ENCODE measurements at regions of chr11 and their contacts with region 1.

Region 1: DNA sequence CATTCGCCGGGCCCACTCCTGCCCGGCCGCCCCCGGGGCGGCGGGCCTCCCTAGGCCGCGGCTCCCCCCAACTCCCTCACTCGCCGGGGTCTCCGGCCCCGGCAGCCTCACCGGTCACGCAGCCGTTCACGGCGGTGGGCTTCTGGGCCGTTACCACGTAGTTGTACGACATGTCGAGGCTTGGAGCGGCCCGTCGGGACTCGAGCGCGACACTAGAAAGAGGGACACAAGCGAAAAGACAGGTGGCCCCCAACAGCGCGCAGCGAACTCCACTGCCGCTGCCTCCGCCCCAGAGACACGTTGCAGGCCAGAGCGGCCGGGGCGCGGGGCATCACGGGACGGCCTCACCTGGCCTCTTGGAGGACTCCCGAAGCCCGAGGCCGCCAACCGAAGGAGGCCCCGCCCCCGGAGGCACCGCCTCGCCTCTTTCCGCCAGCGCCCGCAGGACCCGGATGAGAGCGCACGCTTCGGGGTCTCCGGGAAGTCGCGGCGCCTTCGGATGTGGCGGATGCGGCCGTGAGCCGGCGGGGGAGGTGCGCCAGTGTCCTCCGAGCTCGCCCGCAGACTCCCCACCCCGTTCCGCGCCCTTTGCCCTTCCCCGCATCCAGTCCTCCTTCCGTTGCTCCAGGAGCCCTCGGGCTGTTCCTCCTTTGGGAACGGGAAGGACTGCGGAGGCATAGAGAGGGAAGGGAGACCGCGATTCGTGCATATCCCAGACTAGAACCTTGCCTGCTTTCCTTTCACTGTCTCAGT is at the starts of genes DDB1 and TKFC:
- DNase-seq: peak; percentile 99
- ATAC-seq: peak; percentile 94
- H3K4me3 Mint-ChIP-seq: peak within 1 kb of the TSS; percentile 97
- H3K27ac Mint-ChIP-seq: peak within 1 kb of the TSS; percentile 100
- H3K4me1 Mint-ChIP-seq: peaks cover 64% of the 10 kb centered on the region
- H3K27me3 Mint-ChIP-seq: no peaks in the 10 kb centered on the region
- total RNA-seq, gene DDB1: 258 to 268 TPM
- total RNA-seq, gene TKFC: 100 to 107 TPM

Region 2: GRCh38 chr11:60913793-60914632 is 419.0 kb before region 1 on chr11 and contains the start of gene TMEM109:
- CTCF ChIA-PET with region 1: no interaction called
- POLR2A ChIA-PET with region 1: no interaction called
- intact Hi-C with region 1: loop called in 1 of 2 experiments (anchors 2 kb)
- DNase-seq: peak; percentile 93
- ATAC-seq: peak; percentile 78
- H3K4me3 Mint-ChIP-seq: peak within 1 kb of the TSS; percentile 87
- H3K27ac Mint-ChIP-seq: peak within 1 kb of the TSS; percentile 97
- H3K4me1 Mint-ChIP-seq: peaks cover 58% of the 10 kb centered on the region
- H3K27me3 Mint-ChIP-seq: no peaks in the 10 kb centered on the region
- total RNA-seq, gene TMEM109: 80.3 to 89.1 TPM

Region 3: GRCh38 chr11:61201476-61201875 is 131.5 kb before region 1 on chr11:
- CTCF ChIA-PET with region 1: no interaction called
- POLR2A ChIA-PET with region 1: no interaction called
- intact Hi-C with region 1: no loop called
- DNase-seq: no peak
- ATAC-seq: no peak
- H3K4me3 Mint-ChIP-seq: no peak overlapping the region
- H3K27ac Mint-ChIP-seq: no peak overlapping the region
- H3K4me1 Mint-ChIP-seq: no peaks in the 10 kb centered on the region
- H3K27me3 Mint-ChIP-seq: peaks cover 12% of the 10 kb centered on the region

Region 4: GRCh38 chr11:61353131-61354067 is 20.4 kb after region 1 on chr11:
- CTCF ChIA-PET with region 1: interaction called, 20 read pairs
- POLR2A ChIA-PET with region 1: interaction called, 3 read pairs
- intact Hi-C with region 1: no loop called
- DNase-seq: no peak
- ATAC-seq: no peak
- H3K4me3 Mint-ChIP-seq: no peak overlapping the region
- H3K27ac Mint-ChIP-seq: no peak overlapping the region
- H3K4me1 Mint-ChIP-seq: peaks cover 4% of the 10 kb centered on the region
- H3K27me3 Mint-ChIP-seq: no peaks in the 10 kb centered on the region

Region 5: DNA sequence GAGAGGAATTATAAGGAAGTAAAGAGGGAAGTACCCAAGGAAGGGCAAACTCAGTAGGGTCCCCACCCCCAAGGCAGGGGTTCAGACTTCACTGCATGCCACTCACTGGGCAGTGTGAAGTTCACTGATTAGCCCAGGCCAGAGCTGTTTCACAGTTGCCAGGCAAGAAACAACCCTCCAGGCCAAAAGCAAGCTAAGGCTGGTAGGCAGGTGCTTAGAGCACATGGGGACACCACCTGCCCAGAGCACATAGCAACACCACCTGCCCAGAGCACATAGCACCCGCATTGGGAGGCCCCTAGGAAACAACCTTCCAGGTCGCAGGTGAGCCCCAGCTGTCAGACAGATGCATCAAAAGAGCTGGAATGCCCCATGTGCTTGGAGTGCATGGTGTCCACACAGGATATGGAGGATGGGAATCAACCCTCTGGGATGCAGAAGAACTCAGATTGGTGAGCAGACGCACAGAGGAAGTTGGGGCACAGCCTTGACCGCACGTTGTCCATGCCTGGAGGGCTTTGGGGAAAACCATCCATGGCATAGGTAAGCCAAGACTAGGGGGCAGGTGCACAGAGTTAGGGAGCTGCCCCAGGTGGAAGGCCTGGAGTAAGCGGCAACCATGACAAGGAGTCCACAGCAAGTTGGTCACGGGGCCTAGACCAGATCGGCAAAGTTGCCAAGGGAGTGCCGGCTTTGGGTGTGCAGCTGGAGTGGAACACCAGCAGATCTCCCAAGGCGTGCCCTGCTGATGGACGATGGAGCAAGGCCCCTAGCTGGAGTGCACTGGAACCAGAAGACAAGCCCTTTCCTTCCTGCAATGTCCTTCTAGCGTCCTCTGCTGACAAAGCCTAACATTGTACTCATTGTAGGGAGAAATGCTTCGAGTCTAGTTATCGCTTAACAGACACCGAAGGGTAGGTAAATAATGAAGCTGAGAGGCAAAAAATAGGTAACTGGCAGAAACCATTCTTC is 51.6 kb after region 1 on chr11:
- CTCF ChIA-PET with region 1: interaction called, 185 read pairs
- POLR2A ChIA-PET with region 1: interaction called, 6 read pairs
- intact Hi-C with region 1: loop called (anchors 1 kb)
- DNase-seq: no peak
- ATAC-seq: no peak
- H3K4me3 Mint-ChIP-seq: no peak overlapping the region
- H3K27ac Mint-ChIP-seq: no peak overlapping the region
- H3K4me1 Mint-ChIP-seq: peaks cover 3% of the 10 kb centered on the region
- H3K27me3 Mint-ChIP-seq: no peaks in the 10 kb centered on the region

Region 6: DNA sequence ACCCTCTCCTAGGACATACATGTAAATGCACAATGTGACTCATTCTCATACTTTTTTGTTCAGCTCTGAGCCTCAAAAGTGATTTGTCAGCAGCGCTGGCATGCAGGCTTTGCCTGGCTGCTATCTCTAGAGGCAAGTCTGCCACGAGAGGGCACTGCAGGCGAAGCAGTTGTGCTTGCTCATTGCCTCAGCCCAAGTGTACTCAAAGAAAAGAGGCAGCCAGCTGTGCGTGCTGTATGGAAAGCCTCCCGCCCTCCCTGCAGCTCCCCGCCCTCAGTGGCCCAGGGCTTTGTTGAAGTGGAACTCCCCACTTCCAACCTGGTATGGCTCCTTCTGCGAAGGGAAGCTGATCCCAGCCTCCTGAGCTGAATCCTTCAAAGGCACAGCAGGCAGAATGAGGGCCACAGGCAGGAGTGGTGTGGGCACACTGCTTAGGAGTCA is 113.3 kb after region 1 on chr11:
- CTCF ChIA-PET with region 1: interaction called, 17 read pairs
- POLR2A ChIA-PET with region 1: interaction called, 3 read pairs
- intact Hi-C with region 1: no loop called
- DNase-seq: peak; percentile 95
- ATAC-seq: peak; percentile 87
- H3K4me3 Mint-ChIP-seq: no peak overlapping the region
- H3K27ac Mint-ChIP-seq: peak overlapping the region; percentile 44
- H3K4me1 Mint-ChIP-seq: peaks cover 35% of the 10 kb centered on the region
- H3K27me3 Mint-ChIP-seq: no peaks in the 10 kb centered on the region

Region 7: DNA sequence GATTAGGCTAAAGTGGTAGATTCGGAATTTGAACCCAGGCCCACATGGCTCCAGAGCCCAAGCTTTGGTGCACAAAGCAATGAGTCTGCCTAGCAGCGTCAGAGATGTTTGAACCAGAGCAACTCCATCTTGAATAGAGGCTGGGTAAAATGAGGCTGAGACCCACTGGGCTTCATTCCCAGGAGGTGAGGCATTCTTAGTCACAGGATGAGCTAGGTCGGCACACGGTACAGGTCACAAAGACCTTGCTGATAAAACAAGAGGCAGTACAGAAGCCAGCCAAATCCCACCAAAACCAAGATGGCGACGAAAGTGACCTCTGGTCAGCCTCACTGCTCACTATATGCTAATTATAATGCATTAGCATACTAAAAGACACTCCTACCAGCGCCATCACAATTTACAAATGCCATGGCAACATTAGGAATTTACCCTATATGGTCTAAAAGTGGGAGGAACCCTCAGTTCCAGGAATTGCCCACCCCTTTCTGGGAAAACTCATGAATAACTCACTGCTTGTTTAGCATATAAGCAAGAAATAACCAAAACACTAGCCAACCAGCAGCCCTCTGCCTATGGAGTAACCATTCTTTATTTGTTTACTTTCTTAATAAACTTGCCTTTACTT is 307.0 kb after region 1 on chr11:
- CTCF ChIA-PET with region 1: interaction called, 8 read pairs
- POLR2A ChIA-PET with region 1: no interaction called
- intact Hi-C with region 1: loop called in 1 of 2 experiments (anchors 5 kb)
- DNase-seq: peak; percentile 15
- ATAC-seq: no peak
- H3K4me3 Mint-ChIP-seq: no peak overlapping the region
- H3K27ac Mint-ChIP-seq: no peak overlapping the region
- H3K4me1 Mint-ChIP-seq: no peaks in the 10 kb centered on the region
- H3K27me3 Mint-ChIP-seq: no peaks in the 10 kb centered on the region